SK-N-SH (cell line): ENCODE measurements at regions of chr7 and their contacts with region 1.

Region 1: GRCh38 chr7:31122649-31123058 is 70.5 kb downstream of the ADCYAP1R1 start:
- DNase-seq: peak; percentile 74
- H3K4me3 ChIP-seq: no peak overlapping the region; a peak in 1 of 4 replicates
- H3K27ac ChIP-seq: no peak overlapping the region
- H3K4me1 ChIP-seq: peaks cover 0 to 2% of the 10 kb centered on the region in 2 experiments; a peak in 2 of 4 replicates
- H3K27me3 ChIP-seq: no peaks in the 10 kb centered on the region; the same call in 1 of the 2 replicates
- CTCF ChIP-seq: peak; percentile 99
- EP300 ChIP-seq: no peak
- RAD21 ChIP-seq: peak; percentile 98

Region 2: GRCh38 chr7:30791114-30791779 is 331.4 kb before region 1 on chr7:
- CTCF ChIA-PET with region 1: interaction called, 22 read pairs
- POLR2A ChIA-PET with region 1: no interaction called
- DNase-seq: no peak
- H3K4me3 ChIP-seq: no peak overlapping the region
- H3K27ac ChIP-seq: no peak overlapping the region
- H3K4me1 ChIP-seq: peaks cover 3 to 10% of the 10 kb centered on the region in 2 experiments; a peak in 1 of 4 replicates
- H3K27me3 ChIP-seq: no peaks in the 10 kb centered on the region
- CTCF ChIP-seq: no peak
- EP300 ChIP-seq: no peak
- RAD21 ChIP-seq: peak; percentile 2; the same call in 1 of the 2 replicates

Region 3: DNA sequence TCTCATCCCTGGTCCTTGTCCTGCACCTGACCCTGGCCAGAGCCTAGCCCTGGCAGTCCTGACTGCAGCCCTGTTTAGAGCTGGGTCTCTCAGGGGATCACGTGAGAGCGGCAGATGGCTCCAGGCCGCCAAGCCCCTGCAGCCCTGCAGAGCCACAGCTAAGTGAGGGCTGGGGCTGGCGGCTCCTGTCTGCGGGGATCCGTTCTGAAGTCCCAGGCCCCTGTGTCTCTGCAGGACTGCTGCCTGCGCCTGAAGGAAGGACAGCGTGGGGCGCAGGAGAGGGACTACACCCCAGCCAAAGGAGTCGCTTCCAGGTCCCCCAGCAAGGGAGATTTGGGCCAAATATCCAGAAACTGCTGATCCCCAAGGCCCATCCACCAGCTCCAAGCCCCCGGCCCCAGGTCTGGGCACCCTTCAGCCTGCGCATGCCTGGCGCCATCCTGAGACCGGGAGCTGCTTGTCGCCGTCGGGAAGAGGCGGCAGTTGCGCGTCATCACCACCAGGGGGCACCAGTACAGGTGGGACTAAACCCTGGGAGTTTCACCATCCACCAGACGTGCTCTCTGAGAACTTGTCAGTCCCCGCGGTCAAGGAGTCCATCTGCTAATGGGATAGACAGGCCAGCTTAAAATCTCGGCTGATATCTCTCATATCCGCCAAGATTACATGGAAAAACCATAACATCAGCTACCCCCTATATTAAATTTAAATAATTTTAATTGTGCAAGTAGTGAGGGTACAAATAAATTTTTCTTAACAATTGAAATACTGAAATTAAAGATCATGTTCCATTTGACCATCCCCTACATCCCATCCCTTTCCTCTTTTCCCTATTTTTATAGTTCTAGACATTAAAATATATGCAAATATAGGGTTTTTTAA is 184.0 kb before region 1 on chr7:
- CTCF ChIA-PET with region 1: interaction called, 103 read pairs
- POLR2A ChIA-PET with region 1: no interaction called
- DNase-seq: peak; percentile 92
- H3K4me3 ChIP-seq: peak overlapping the region; percentile 33 to 54; a peak in 3 of 4 replicates
- H3K27ac ChIP-seq: peak overlapping the region in 1 of 2 experiments; percentile 67; a peak in 1 of 4 replicates
- H3K4me1 ChIP-seq: peaks cover 0 to 7% of the 10 kb centered on the region in 2 experiments; a peak in 1 of 4 replicates
- H3K27me3 ChIP-seq: no peaks in the 10 kb centered on the region; the same call in 1 of the 2 replicates
- CTCF ChIP-seq: peak; percentile 99
- EP300 ChIP-seq: no peak
- RAD21 ChIP-seq: peak; percentile 76

Region 4: DNA sequence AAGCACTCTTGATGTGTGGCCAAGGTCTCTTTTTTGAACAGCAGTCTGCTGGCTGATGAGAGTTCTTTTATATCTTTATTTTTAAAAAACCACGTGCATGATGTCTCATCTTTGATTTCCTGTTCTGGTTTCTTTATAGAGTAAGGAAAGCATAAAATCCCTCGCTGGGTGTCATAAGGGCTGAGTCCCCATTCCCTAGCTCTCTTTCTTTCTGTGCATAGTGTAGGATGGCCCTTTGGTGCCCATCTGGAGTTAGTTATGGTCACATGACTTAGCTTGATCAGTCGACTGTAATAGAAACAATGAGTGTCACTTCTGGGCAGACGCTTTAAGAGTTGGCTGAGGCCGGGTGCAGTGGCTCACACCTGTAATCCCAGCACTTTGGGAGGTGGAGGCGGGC is 120.4 kb before region 1 on chr7:
- CTCF ChIA-PET with region 1: interaction called, 1,191 read pairs
- POLR2A ChIA-PET with region 1: no interaction called
- DNase-seq: peak; percentile 68
- H3K4me3 ChIP-seq: no peak overlapping the region
- H3K27ac ChIP-seq: no peak overlapping the region
- H3K4me1 ChIP-seq: no peaks in the 10 kb centered on the region; a peak in 1 of 4 replicates
- H3K27me3 ChIP-seq: peaks cover 19% of the 10 kb centered on the region; the same call in 1 of the 2 replicates
- CTCF ChIP-seq: no peak
- EP300 ChIP-seq: no peak
- RAD21 ChIP-seq: no peak

Region 5: DNA sequence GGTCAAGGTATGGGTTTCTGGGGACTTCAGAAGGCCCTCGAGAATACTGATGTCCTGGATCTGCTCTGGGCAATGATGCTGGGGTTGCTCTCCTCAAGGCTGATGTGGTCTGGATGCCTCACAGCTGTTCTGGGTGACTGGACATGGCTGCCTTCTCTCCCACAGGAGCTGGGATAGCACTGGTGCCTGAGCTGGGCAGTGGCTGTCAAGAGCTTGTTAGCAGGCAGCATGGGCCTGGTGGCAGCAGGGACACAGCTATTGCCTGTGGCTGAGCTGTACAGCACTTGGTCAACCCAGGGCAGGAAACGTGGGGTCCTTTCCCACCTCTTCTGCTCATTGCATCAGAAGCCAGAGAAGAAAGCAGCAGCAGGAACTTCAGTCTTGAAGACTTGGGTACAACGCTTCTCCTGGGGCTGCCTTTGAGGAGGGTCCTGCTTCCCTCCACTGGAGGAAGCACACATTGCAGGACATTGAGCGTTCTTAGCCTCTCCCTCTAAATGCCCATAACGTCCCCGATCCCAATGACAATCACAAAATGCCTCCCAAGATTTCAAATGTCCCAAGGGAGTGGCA is 57.5 kb before region 1 on chr7:
- CTCF ChIA-PET with region 1: interaction called, 337 read pairs
- POLR2A ChIA-PET with region 1: no interaction called
- DNase-seq: no peak
- H3K4me3 ChIP-seq: no peak overlapping the region
- H3K27ac ChIP-seq: no peak overlapping the region
- H3K4me1 ChIP-seq: peaks cover 0 to 9% of the 10 kb centered on the region in 2 experiments; a peak in 1 of 4 replicates
- H3K27me3 ChIP-seq: peaks cover 5% of the 10 kb centered on the region; the same call in 1 of the 2 replicates
- CTCF ChIP-seq: no peak
- EP300 ChIP-seq: no peak
- RAD21 ChIP-seq: no peak

Region 6: DNA sequence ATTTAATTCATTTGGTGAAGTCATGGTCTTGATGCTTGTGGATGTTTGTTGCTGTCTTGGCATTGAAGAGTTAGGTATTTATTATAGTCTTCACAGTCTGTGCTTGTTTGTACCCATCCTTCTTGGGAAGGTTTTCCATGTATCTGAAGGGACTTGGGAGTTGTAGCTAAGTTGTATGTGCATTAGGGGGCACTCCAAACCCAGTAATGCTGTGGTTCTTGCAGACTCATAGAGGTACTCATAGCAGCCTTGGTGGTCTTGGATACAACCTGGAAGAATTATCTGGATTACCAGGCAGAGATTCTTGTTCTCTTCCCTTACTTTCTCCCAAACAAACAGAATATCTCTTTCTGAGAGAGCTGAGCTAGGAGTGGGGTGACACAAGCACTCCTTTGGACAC is 22.7 kb after region 1 on chr7:
- CTCF ChIA-PET with region 1: interaction called, 10 read pairs
- POLR2A ChIA-PET with region 1: no interaction called
- DNase-seq: no peak
- H3K4me3 ChIP-seq: no peak overlapping the region
- H3K27ac ChIP-seq: no peak overlapping the region
- H3K4me1 ChIP-seq: no peaks in the 10 kb centered on the region
- H3K27me3 ChIP-seq: peaks cover 11% of the 10 kb centered on the region
- CTCF ChIP-seq: no peak
- EP300 ChIP-seq: no peak
- RAD21 ChIP-seq: no peak; the same call in 1 of the 2 replicates

Region 7: DNA sequence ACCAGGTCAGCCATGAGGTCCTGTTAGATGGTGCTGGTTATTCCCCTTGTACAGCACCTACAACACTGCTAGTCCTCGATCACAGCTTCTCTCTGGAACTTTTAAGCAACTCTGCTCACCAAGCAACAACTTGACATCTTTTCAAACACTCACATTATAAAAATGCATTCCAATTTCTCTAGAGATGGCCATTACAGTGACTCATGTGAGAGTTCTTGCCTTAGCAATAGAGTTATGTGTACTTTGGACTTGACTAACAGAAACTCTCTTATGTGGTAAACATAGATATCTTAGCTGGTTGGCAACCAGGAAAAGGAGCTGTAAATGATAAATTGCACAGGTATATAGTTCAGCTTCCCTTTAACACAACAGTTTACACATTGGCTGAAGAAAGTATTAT is 825.4 kb after region 1 on chr7:
- CTCF ChIA-PET with region 1: no interaction called
- POLR2A ChIA-PET with region 1: no interaction called
- DNase-seq: no peak
- H3K4me3 ChIP-seq: no peak overlapping the region
- H3K27ac ChIP-seq: peak overlapping the region; percentile 62 to 82; a peak in 3 of 4 replicates
- H3K4me1 ChIP-seq: peaks cover 0 to 18% of the 10 kb centered on the region in 2 experiments; a peak in 1 of 4 replicates
- H3K27me3 ChIP-seq: no peaks in the 10 kb centered on the region
- CTCF ChIP-seq: no peak
- EP300 ChIP-seq: no peak
- RAD21 ChIP-seq: no peak